HEK293 (cell line): ENCODE measurements at regions of chr9 and their contacts with region 1.

Region 1: DNA sequence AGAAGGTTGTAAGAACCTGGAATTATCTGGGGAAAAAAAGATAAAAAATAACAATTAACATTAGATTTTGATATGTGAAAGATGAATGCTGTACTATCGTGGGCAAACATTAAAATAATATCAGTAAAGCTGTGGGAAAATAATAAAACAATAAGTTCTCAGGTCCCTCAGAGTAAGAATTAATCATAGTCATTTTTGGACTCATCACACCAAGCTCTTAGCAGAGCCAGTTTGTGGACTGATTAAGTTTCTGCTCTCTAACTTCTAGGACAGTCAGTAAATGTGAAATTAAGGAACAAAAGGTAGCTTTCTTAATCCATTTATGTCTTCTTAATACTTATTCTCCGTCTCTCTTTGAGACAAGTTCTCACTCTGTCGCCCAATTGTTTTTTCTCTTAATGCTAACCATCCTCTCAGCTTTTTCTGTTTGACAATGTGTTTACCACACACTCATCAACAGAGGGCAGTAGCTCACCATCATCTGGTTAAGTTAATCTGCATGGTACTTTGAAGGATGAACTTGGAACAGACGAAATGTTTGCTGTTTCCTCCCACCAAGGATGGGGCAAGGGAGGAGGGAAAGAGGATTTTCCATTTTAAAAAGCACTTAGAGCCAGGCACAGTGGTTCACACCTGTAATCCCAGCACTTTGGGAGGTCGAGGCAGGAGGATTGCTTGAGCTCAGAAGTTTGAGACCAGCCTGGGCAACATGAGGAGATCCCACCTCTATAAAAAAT is 5.3 kb upstream of the ACO1 start:
- H3K4me3 ChIP-seq: no peak overlapping the region
- H3K27ac ChIP-seq: no peak overlapping the region
- H3K4me1 ChIP-seq: no peaks in the 10 kb centered on the region
- CTCF ChIP-seq: 0 out of 2 replicates have a peak, but pooled peaks have one; percentile 26

Region 2: DNA sequence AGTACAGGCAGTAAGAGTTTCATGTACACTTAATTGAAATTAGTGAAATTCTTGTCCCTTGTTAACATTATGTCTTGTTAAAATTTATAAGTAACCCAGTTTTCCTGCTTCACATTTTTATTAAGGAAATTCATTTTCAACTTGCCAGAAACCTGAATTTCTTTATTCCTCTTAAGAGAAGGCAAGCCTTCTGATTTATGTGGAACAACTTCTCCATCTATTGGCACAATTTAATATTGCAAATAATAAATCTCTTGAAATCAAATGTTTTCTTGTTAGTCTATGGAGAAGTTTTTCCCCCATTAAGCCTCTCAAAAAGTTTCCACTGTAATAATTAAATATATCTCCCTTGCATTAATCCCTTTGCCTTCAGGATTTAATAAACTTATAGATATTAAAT is 28.5 kb before region 1 on chr9:
- CTCF ChIA-PET with region 1: no interaction called
- POLR2A ChIA-PET with region 1: no interaction called
- H3K4me3 ChIP-seq: no peak overlapping the region
- H3K27ac ChIP-seq: no peak overlapping the region
- H3K4me1 ChIP-seq: no peaks in the 10 kb centered on the region
- CTCF ChIP-seq: no peak

Region 3: GRCh38 chr9:32395490-32396216 is 16.5 kb after region 1 on chr9:
- CTCF ChIA-PET with region 1: interaction called, 32 read pairs
- POLR2A ChIA-PET with region 1: interaction called, 4 read pairs
- H3K4me3 ChIP-seq: no peak overlapping the region
- H3K27ac ChIP-seq: no peak overlapping the region
- H3K4me1 ChIP-seq: no peaks in the 10 kb centered on the region
- CTCF ChIP-seq: no peak

Region 4: DNA sequence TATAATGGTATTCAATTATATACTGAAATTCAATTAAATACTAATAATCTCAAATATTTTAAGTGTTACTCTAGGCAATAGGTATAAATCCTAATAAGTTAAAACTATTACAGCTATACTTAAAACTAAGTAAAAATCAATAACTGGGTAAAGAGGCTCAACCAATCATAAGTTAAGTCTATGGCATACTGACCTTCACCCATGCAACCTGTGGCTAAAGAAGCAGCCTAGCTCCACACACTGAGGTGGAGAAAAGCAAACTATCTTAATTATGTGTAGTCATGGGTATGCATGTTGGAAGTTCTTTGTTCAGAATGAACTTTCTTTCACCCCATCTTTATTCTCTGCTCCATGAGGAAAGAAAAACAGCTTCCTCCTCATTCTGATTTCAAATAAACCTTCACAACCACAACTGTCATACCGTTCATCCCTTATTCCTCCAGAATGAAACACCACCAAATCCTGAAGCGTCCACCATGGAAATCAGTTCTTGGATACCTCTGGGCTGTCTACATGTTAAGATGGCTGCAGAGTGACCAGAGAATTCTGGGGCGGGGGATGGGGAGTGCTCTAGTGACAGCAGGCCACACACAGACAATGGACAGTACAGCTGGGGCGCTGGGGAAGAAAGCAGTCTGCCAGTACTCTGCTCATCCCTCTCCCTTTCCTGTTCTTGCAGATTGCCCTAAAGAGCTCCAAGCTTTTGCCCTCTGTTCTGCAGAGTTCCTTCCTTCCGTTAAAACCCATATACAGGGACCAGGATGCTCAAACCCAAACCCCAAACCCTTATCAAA is 84.5 kb after region 1 on chr9:
- CTCF ChIA-PET with region 1: interaction called, 10 read pairs
- POLR2A ChIA-PET with region 1: no interaction called
- H3K4me3 ChIP-seq: no peak overlapping the region
- H3K27ac ChIP-seq: no peak overlapping the region
- H3K4me1 ChIP-seq: no peaks in the 10 kb centered on the region
- CTCF ChIP-seq: no peak

Region 5: DNA sequence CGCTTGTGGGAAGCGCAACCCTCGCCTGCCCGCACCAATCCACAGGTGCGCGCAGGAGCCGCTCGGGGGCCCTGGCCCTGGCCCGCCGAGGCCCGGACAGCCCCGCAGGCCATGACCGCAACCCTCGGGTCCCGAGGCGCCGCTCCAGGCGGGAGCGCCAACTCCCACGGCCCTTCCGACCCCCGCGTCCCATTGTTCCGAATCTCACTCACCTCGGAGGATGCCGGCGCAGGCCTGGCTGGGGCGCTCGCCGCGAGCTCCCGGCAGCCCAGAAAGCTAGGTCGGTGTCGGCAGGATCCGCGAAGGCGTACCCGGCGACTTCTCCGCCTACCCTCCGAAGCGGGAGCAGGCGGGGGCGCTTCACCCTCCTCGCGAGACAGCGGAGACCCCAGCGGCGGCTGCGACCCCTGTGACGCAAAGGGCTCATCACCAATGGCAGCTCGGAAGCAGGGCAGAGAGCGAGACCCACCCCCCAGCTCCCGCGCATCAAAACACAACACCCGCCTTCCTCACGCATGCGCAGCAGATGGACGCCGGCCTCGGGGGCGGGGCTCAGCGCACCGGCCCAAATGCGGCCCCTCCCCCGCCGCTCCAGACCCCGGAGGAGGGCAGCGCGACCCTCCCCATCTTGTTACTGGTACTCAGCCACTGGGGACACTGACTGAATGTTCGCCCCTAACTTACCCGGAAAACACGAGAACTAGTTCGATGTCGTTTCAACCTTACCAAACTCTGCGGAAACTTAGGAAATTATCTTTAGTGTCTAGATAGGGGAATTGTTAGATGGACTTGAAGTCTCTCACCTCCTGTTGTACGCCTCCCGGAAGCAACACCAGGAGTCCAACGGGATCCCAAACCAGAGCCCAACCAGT is 171.6 kb after region 1 on chr9:
- CTCF ChIA-PET with region 1: interaction called, 25 read pairs
- POLR2A ChIA-PET with region 1: interaction called, 9 read pairs
- H3K4me3 ChIP-seq: peak overlapping the region; percentile 84
- H3K27ac ChIP-seq: peak overlapping the region; percentile 91
- H3K4me1 ChIP-seq: 0 out of 2 replicates have a peak, but pooled peaks cover 4% of the 10 kb centered on the region
- CTCF ChIP-seq: peak; percentile 65; the same call in 1 of the 2 replicates

Region 6: GRCh38 chr9:32571969-32572899 is 193.1 kb after region 1 on chr9:
- CTCF ChIA-PET with region 1: interaction called, 583 read pairs
- POLR2A ChIA-PET with region 1: interaction called, 14 read pairs
- H3K4me3 ChIP-seq: peak overlapping the region; percentile 57
- H3K27ac ChIP-seq: peak overlapping the region; percentile 64
- H3K4me1 ChIP-seq: peaks cover 4% of the 10 kb centered on the region; the same call in 1 of the 2 replicates
- CTCF ChIP-seq: 0 out of 2 replicates have a peak, but pooled peaks have one; percentile 19

Region 7: GRCh38 chr9:32954642-32955041 is 575.5 kb after region 1 on chr9:
- CTCF ChIA-PET with region 1: interaction called, 18 read pairs
- POLR2A ChIA-PET with region 1: no interaction called
- H3K4me3 ChIP-seq: no peak overlapping the region
- H3K27ac ChIP-seq: no peak overlapping the region
- H3K4me1 ChIP-seq: no peaks in the 10 kb centered on the region
- CTCF ChIP-seq: no peak